Activated CD8-positive, alpha-beta memory T cell treated with anti-CD3 and anti-CD28 coated beads, Interleukin-2, amount 10 ng/mL, durations not matched to agents 7 days and 5 days (primary cell): ENCODE measurements at regions of chr20 and their contacts with region 1.

Region 1: DNA sequence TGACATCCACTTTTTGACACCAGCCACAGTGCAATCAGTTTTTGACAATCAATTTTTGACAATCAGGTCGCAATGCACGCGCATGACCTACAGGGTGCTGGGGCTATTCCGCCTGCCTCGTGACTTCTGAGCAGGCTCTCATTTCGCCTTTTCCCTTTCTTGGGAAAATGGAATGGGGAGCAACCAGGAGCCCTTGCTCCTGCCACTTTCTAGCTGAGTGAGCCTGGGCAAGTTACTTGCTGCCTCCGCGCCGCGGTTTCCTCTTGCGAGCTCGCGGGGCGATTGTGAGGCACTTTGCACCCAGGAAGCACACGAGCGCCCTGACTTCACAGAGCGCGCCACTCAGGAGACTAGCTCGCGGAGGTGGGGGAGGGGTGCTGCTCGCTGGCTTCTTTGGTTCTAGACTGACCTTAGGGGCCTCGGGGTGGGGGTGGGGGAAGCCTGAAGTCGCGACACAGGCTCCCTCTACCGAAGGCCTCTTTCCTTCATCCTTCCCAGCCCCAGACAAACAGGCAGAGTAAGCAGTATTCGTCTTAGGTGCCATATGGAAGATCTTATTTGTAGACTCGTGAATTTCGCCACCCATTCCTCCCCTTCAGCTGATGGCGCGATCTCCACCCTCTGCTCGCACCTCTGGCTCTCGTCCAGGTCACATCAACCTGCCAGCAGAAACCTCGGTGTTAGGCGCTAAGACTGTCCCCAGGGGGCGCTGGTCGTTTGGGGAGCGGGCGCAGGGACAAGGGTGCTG is 4.6 kb downstream of the TP53TG5 start:
- DNase-seq: peak; percentile 92
- ATAC-seq: peak; percentile 95
- H3K4me3 Mint-ChIP-seq: peak overlapping the region; percentile 78
- H3K27ac Mint-ChIP-seq: peak overlapping the region; percentile 90
- H3K4me1 Mint-ChIP-seq: peaks cover 27% of the 10 kb centered on the region
- H3K27me3 Mint-ChIP-seq: no peaks in the 10 kb centered on the region

Region 2: DNA sequence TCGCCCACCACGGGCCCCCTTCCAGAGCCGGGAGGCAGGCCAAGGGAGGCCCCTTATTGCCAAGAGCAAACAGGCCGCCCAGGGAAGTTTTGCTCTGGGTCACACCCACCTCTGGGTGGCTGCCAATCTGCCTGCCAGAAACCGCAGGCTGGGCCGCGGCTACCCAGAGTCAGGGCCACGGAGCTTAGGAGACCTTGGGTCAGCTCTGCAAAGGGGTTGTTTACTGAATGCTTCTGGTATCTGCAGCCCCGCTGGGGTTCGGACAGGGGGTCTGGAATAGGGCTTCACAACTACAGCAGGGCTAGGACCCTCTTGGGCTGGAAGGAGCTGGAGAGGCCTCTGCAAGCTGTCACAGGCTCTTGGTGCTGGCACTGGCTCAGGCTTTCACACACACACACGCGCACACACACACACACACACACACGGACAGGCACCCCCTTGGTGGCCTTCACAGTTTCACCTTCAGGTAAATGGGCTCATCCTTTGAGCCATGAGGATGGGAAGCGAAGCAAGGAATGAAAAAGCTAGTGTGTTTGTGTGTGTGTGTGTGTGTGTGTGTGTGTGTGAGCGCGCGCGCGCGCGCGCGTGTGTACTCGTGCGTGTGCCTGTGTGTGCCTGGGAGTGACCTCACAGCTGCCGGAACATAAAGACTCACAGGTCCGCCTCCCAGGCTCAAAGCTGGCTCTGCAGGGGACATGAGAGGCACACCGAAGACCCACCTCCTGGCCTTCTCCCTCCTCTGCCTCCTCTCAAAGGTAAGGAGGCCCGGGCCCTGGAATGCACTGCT is 658.6 kb before region 1 on chr20 and contains the start of gene CCN5:
- CTCF ChIA-PET with region 1: no interaction called
- DNase-seq: no peak
- ATAC-seq: no peak
- H3K4me3 Mint-ChIP-seq: no peak within 1 kb of the TSS
- H3K27ac Mint-ChIP-seq: no peak within 1 kb of the TSS
- H3K4me1 Mint-ChIP-seq: no peaks in the 10 kb centered on the region
- H3K27me3 Mint-ChIP-seq: peaks cover 3% of the 10 kb centered on the region
- total RNA-seq, gene CCN5: not detected

Region 3: DNA sequence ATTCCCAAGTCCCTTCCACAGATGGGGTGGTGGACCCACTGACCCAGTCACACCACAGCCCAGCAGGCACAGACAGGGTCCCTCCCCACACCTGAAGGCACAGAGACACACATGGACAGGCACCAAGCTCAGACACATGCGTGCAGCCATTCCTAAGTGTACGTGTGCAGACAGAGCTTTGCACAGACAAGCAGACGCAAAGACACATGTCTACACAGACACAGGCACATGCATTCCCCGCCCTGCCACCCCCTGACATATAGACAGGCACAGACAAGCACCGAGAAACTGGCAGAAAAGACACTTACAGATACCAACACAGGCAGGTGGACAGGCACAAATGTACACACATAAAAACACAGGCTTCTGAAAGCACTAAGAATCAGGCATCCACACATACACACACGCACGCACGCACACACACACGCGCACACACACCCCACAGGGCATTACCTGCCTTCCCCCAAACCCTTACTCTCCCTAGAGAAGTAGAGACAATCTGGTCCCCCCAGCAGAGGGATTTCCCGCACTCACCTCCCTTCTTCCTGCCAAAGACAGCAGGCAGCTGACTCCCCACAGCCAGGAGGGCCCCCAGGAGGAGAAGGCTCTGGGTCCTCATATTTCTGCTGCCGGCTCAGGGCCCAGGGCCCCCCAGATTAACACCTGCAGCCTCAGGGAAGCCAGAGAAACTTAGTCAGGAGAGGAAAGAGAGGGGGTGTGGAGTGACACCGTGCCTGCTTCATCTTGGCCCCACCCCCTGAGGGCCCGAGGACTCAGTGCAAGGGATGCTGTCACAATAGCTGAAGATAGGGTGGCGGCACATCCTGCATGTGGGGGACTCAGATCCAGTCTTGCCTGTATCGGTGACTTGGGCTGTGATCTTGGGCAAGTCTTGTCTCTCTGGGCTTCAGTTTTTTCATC is 258.8 kb before region 1 on chr20 and contains the start of gene WFDC5:
- CTCF ChIA-PET with region 1: no interaction called
- DNase-seq: no peak
- ATAC-seq: peak; percentile 53
- H3K4me3 Mint-ChIP-seq: no peak within 1 kb of the TSS
- H3K27ac Mint-ChIP-seq: no peak within 1 kb of the TSS
- H3K4me1 Mint-ChIP-seq: peaks cover 3% of the 10 kb centered on the region
- H3K27me3 Mint-ChIP-seq: peaks cover 14% of the 10 kb centered on the region
- total RNA-seq, gene WFDC5: not detected

Region 4: GRCh38 chr20:45283548-45284057 is 89.9 kb before region 1 on chr20:
- CTCF ChIA-PET with region 1: no interaction called
- DNase-seq: no peak
- ATAC-seq: no peak
- H3K4me3 Mint-ChIP-seq: no peak overlapping the region
- H3K27ac Mint-ChIP-seq: no peak overlapping the region
- H3K4me1 Mint-ChIP-seq: peaks cover 2% of the 10 kb centered on the region
- H3K27me3 Mint-ChIP-seq: peaks cover 40% of the 10 kb centered on the region

Region 5: GRCh38 chr20:45347936-45348778 is 25.4 kb before region 1 on chr20 and contains the start of gene SDC4:
- CTCF ChIA-PET with region 1: interaction called, 10 read pairs
- DNase-seq: peak; percentile 72
- ATAC-seq: peak; percentile 91
- H3K4me3 Mint-ChIP-seq: peak within 1 kb of the TSS; percentile 77
- H3K27ac Mint-ChIP-seq: peak within 1 kb of the TSS; percentile 67
- H3K4me1 Mint-ChIP-seq: peaks cover 40% of the 10 kb centered on the region
- H3K27me3 Mint-ChIP-seq: no peaks in the 10 kb centered on the region
- total RNA-seq, gene SDC4: 15.0 to 50.7 TPM

Region 6: DNA sequence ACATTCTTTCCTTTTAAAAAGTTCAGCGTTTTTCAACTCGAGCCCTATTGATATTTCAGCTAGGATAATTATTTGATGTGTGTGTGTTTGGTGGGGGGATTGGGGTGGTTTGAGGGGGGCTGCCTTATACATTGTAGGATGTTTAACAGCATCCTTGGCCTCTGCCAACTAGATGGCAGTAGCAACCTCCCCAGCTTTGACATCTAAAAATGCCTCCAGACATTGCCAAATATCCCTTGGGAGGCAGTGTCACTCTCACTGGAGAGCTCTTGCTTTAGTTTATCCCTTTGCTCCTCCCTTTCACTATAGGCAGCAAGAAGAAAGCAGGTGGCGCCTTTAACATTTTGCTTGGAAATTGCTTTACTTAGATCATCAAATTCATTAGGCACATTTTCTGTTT is 19.2 kb after region 1 on chr20:
- CTCF ChIA-PET with region 1: interaction called, 13 read pairs
- DNase-seq: no peak
- ATAC-seq: no peak
- H3K4me3 Mint-ChIP-seq: no peak overlapping the region
- H3K27ac Mint-ChIP-seq: no peak overlapping the region
- H3K4me1 Mint-ChIP-seq: peaks cover 7% of the 10 kb centered on the region
- H3K27me3 Mint-ChIP-seq: no peaks in the 10 kb centered on the region

Region 7: DNA sequence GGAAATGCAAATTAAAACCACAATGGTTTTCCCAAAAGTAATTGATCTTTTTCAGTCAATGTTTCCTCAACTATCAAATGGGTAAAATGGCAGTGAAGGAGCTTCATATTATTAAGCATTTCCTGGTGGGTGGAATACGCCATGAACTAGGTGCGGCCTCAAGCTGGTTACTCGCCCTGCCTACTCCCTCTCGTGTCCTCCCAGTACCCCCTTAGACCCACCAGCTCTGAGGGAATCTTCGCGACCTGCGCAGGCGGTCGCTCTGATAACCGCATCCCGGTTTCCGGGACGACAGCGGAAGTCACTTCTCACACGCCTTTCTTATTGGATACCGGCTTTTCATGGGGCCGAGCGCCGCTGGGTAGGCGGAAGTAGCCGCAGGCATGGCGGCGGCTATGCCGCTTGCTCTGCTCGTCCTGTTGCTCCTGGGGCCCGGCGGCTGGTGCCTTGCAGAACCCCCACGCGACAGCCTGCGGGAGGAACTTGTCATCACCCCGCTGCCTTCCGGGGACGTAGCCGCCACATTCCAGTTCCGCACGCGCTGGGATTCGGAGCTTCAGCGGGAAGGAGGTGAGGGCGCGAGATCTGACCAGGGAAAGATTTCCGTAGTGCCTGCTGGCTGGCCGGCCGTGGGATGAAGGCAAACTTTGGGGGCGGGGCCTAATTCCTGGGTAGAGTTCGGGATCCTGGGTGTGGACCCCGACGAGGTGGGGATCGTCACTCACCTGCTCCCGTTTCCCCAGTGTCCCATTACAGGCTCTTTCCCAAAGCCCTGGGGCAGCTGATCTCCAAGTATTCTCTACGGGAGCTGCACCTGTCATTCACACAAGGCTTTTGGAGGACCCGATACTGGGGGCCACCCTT is 42.5 kb after region 1 on chr20 and contains the start of gene PIGT:
- CTCF ChIA-PET with region 1: interaction called, 56 read pairs
- DNase-seq: peak; percentile 93
- ATAC-seq: peak; percentile 94
- H3K4me3 Mint-ChIP-seq: peak within 1 kb of the TSS; percentile 91
- H3K27ac Mint-ChIP-seq: peak within 1 kb of the TSS; percentile 92
- H3K4me1 Mint-ChIP-seq: peaks cover 49% of the 10 kb centered on the region
- H3K27me3 Mint-ChIP-seq: no peaks in the 10 kb centered on the region
- total RNA-seq, gene PIGT: 68.0 to 79.2 TPM

Region 8: DNA sequence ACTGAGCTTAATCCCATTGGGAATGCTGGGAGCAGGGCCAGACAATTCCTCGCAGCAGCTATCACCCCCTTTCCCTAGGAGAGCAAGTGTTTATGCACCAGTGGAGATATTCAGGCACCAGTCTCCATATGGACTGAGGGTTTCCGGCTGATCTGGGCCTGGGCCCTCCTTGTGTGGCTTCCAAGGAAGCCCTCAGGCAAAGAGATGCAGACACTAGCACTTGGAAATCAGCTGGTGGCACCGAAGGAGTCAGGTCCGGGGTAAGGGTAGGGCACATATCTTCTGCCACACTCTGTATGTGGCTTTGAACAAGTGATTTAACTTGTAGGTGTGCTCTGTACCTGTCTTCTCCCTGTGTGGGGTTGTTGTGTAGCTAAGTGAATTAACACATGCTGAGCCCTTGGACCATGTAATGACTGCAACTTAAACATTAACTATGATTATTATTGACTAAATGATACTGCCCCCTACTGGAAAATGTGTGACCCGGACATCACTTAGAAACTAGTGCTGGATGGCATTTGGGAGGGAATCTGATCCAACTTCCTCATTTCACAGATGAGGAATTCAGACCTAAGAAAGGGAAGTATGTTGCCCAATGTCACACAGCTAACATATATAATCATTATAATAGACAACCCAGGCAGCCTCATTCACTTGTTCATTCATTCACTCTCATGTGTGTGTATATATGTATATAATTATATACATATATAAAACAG is 76.7 kb after region 1 on chr20:
- CTCF ChIA-PET with region 1: interaction called, 29 read pairs
- DNase-seq: no peak
- ATAC-seq: peak; percentile 34
- H3K4me3 Mint-ChIP-seq: no peak overlapping the region
- H3K27ac Mint-ChIP-seq: no peak overlapping the region
- H3K4me1 Mint-ChIP-seq: peaks cover 15% of the 10 kb centered on the region
- H3K27me3 Mint-ChIP-seq: peaks cover 8% of the 10 kb centered on the region